ENCODE measurements at regions of chr1 and their contacts with region 1.

Region 1: DNA sequence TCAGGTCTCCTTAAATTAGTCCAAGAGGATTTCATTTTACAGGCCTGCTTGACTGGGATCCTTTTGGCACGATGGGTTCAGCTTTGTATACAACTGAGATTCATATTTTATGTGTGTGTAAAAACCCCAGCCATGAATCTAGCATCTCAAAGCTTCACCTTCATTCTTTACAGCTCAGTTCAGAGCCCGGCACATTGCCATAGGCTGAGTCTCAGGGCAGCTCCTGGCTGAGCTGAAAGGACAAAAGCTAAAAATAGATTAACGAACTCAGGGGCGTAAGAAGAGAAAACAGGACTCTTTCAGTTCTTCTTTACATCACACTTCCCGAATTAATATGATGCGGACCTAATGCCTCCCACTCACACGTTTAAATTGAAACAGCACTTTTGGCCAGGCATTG is 262.8 kb upstream of the PBX1 start:
- DNase-seq: no peak
- H3K4me3 Mint-ChIP-seq: no peak overlapping the region
- H3K27ac Mint-ChIP-seq: no peak overlapping the region
- H3K4me1 Mint-ChIP-seq: no peaks in the 10 kb centered on the region
- H3K27me3 Mint-ChIP-seq: no peaks in the 10 kb centered on the region

Region 2: DNA sequence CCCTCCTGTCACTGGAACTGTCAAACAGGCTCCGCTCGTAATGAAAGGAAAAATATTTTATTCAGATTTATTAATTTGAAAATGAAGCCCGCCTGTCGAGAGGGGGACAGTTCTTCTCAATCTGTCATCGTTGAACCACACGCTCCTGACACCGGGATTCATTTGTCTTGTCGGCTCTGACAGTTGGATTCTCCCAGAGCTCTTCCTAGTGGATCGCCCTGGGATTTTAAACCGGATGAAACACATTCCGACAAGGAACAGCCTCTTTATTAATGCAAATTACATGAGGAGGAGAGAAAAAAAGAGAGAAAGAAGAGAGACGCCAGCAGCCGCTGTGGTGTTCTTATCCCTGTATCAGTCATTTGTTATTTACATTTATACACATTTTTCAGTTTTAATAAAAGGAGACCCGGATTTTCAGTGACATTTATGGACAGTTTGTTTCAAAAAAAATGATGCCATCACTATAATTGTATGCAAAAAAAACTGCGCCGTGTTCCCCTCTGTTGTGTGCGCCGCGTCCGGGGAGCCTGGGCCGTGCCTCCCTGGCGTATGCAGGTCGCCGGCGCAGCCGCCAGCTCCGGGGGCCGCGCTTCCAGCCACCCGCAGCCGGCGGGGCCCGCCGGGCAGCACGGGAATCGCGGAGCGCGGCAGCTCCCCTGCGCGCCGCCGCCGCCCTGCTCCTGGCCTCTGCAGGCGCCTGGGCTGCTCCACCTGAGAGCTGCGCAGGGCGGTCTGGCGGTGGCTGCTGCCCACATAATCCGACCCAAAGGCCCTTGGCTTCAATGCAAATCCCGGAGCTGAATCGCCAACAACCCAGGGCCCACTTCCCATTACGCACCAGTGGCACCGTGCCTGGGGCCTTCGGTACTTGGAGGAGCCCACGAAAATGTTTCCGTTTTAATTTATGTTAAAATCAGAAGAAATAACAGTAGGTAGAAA is 24.9 kb after region 1 on chr1:
- CTCF ChIA-PET with region 1: no interaction called
- intact Hi-C with region 1: no loop called
- DNase-seq: no peak
- H3K4me3 Mint-ChIP-seq: no peak overlapping the region
- H3K27ac Mint-ChIP-seq: no peak overlapping the region
- H3K4me1 Mint-ChIP-seq: no peaks in the 10 kb centered on the region
- H3K27me3 Mint-ChIP-seq: peaks cover 12% of the 10 kb centered on the region

Region 3: DNA sequence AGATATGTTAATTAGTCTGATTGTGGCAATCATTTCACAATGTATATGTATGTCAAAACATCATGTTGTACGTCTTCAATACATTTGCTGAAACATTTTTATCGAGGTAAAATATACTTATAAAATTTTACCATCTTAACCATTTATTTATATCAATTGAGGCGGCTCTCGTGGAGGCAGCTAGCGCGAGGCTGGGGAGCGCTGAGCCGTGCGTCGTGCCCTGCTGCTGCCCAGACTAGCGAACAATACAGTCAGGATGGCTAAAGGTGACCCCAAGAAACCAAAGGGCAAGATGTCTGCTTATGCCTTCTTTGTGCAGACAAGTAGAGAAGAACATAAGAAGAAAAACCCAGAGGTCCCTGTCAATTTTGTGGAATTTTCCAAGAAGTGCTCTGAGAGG is 60.3 kb after region 1 on chr1:
- CTCF ChIA-PET with region 1: no interaction called
- intact Hi-C with region 1: loop called (anchors 10 kb)
- DNase-seq: no peak
- H3K4me3 Mint-ChIP-seq: no peak overlapping the region
- H3K27ac Mint-ChIP-seq: no peak overlapping the region
- H3K4me1 Mint-ChIP-seq: no peaks in the 10 kb centered on the region
- H3K27me3 Mint-ChIP-seq: no peaks in the 10 kb centered on the region

Region 4: DNA sequence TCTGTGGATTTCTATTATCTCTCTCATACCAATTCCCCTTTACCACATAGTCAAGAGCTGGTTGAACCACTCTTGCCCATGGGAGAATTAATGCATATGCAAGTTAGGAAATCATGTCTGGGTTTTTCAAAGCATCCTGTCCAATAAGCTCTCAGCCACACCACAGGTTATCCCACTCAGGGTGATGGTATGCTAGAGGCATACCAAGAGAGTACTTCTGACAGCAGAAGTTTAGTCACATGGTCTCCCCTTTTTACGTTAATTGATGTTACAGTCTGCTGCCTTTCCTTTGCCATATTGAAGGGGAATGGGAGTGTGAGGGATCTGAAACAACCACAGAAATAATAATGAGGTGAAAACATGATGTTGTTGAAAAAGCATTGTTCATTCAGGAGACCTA is 127.0 kb after region 1 on chr1:
- CTCF ChIA-PET with region 1: interaction called, 10 read pairs
- intact Hi-C with region 1: no loop called
- DNase-seq: no peak
- H3K4me3 Mint-ChIP-seq: no peak overlapping the region
- H3K27ac Mint-ChIP-seq: no peak overlapping the region
- H3K4me1 Mint-ChIP-seq: no peaks in the 10 kb centered on the region
- H3K27me3 Mint-ChIP-seq: no peaks in the 10 kb centered on the region

Measured in activated naive CD4-positive, alpha-beta T cell treated with anti-CD3 and anti-CD28 coated beads for 36 hours (primary cell).